Left colon (tissue), 2 donors: ENCODE measurements at regions of chr1 and their contacts with region 1.

Region 1: GRCh38 chr1:28091043-28091781 is 2.8 kb upstream of the EYA3 start:
- DNase-seq: peak; percentile 64 to 79
- ATAC-seq: peak; percentile 20

Region 2: GRCh38 chr1:28208818-28209441 is 117.7 kb after region 1 on chr1:
- intact Hi-C with region 1: loop called in 1 of 2 experiments (anchors 5 kb)
- DNase-seq: peak; percentile 45 to 73
- ATAC-seq: peak; percentile 97